CD8-positive, alpha-beta T cell (primary cell): ENCODE measurements at regions of chr6 and their contacts with region 1.

Region 1: GRCh38 chr6:131627724-131628682 is at the start of gene MED23:
- DNase-seq: peak; percentile 92 to 99 (median 95)
- ATAC-seq: peak; percentile 94
- H3K4me3 ChIP-seq: peak within 1 kb of the TSS; percentile 83 to 86
- H3K4me3 Mint-ChIP-seq: peak within 1 kb of the TSS; percentile 98
- H3K27ac ChIP-seq: peak within 1 kb of the TSS; percentile 62 to 72
- H3K27ac Mint-ChIP-seq: peak within 1 kb of the TSS; percentile 94
- H3K4me1 ChIP-seq: peaks cover 18% of the 10 kb centered on the region
- H3K4me1 Mint-ChIP-seq: peaks cover 32% of the 10 kb centered on the region
- H3K27me3 ChIP-seq: no peaks in the 10 kb centered on the region
- H3K27me3 Mint-ChIP-seq: no peaks in the 10 kb centered on the region
- CTCF ChIP-seq: peak; percentile 95
- total RNA-seq, gene MED23: 65.3 to 70.0 TPM

Region 2: DNA sequence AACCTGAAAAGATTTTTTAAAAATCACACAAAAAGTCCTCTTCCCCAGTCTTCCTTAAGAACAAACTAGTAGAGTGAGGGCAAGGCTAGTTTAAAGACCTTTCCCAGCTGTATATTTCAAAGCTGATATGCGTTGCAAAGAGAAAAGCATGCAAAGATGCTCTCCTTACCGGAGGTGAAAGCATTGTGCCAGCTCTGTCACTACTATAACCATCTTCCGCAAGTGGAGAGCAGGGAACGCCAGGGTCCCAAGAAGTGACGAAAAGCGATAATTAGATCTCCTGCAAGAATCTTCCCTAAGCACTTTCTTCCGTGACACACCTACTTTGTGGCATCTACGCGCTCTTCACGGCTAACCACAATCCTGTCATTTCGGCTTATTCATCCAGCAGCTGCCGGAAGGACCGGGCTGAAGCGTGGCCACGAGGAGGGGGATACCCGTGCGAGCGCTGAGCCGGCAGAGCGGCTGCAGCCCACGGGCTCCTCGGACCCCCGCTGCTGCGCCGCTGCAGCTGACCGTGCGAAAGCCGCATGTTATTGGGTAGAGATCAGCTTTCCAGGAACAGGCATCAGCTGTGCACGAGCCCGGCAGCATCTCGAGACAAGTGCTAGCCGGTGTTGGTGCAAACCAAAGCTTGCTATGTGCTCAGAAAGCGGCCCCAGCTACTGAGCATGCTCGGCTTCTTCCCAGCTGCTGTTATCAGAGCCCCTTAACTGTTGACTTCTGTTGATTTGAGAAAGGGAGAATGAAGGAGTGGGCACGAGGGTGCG is 1860.9 kb before region 1 on chr6:
- CTCF ChIA-PET with region 1: no interaction called
- POLR2A ChIA-PET with region 1: no interaction called
- intact Hi-C with region 1: loop called in 1 of 2 experiments (anchors 10 kb)
- DNase-seq: peak in 8 of 9 experiments; percentile 19 to 76 (median 56)
- ATAC-seq: peak; percentile 86
- H3K4me3 ChIP-seq: peak overlapping the region; percentile 49
- H3K4me3 Mint-ChIP-seq: peak overlapping the region; percentile 76
- H3K27ac ChIP-seq: no peak overlapping the region
- H3K27ac Mint-ChIP-seq: no peak overlapping the region
- H3K4me1 ChIP-seq: peaks cover 12% of the 10 kb centered on the region
- H3K4me1 Mint-ChIP-seq: peaks cover 10% of the 10 kb centered on the region
- H3K27me3 ChIP-seq: peaks cover 0 to 4% of the 10 kb centered on the region in 2 experiments
- H3K27me3 Mint-ChIP-seq: peaks cover 35% of the 10 kb centered on the region
- CTCF ChIP-seq: no peak

Region 3: GRCh38 chr6:130885392-130886192 is 742.4 kb before region 1 on chr6:
- CTCF ChIA-PET with region 1: interaction called, 27 read pairs
- POLR2A ChIA-PET with region 1: interaction called, 3 read pairs
- intact Hi-C with region 1: loop called (anchors 1 to 2 kb)
- DNase-seq: peak; percentile 50 to 86 (median 73)
- ATAC-seq: peak; percentile 91
- H3K4me3 ChIP-seq: no peak overlapping the region
- H3K4me3 Mint-ChIP-seq: no peak overlapping the region
- H3K27ac ChIP-seq: no peak overlapping the region
- H3K27ac Mint-ChIP-seq: no peak overlapping the region
- H3K4me1 ChIP-seq: no peaks in the 10 kb centered on the region
- H3K4me1 Mint-ChIP-seq: no peaks in the 10 kb centered on the region
- H3K27me3 ChIP-seq: no peaks in the 10 kb centered on the region
- H3K27me3 Mint-ChIP-seq: no peaks in the 10 kb centered on the region
- CTCF ChIP-seq: peak; percentile 97

Region 4: DNA sequence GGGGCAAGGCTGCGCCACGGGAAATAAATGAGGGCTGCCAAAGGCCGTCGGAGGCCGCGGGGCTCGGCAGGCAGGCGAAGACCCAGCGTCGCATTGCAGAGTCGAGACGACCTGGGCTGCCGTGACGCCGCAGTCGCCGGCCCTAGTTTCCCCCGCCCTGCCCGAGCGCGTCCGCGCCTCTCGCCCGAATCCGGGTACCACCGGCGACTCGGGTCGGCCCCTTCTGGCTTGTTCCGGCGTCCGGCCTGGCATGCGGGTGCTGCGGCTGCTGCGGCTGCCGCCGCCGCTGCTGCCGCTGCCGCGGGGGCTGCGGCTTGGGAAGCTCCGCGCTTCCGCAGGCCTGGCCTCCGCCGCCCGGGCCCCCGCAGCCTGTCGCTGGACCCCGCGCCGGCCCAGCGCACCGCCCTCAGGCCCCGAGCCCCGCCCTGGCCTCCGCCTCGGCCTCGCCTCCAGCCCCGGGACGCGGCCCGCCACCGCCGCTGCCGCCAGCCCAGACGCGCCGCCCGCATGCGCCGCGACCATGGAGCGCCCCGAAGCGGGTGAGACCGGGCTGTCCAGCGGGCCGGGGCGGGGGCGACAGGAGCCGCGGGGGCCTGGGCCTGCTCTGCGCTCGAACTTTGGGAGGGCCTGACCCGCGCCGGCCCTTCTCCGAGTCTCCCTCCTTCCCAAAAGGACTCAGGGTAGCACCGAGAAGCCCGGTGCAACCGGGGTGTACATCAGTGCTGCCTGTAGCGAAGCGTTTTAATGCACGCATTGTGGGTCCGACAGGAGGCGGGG is 492.6 kb before region 1 on chr6 and contains the start of gene AKAP7:
- CTCF ChIA-PET with region 1: interaction called, 6 read pairs
- POLR2A ChIA-PET with region 1: interaction called, 4 read pairs
- intact Hi-C with region 1: loop called in 1 of 2 experiments (anchors 1 kb)
- DNase-seq: peak; percentile 14 to 80 (median 51)
- ATAC-seq: peak; percentile 79
- H3K4me3 ChIP-seq: peak within 1 kb of the TSS; percentile 58 to 66
- H3K4me3 Mint-ChIP-seq: peak within 1 kb of the TSS; percentile 92
- H3K27ac ChIP-seq: peak within 1 kb of the TSS; percentile 58 to 68
- H3K27ac Mint-ChIP-seq: peak within 1 kb of the TSS; percentile 95
- H3K4me1 ChIP-seq: peaks cover 12% of the 10 kb centered on the region
- H3K4me1 Mint-ChIP-seq: peaks cover 36% of the 10 kb centered on the region
- H3K27me3 ChIP-seq: no peaks in the 10 kb centered on the region
- H3K27me3 Mint-ChIP-seq: no peaks in the 10 kb centered on the region
- CTCF ChIP-seq: no peak
- total RNA-seq, gene AKAP7: 11.7 to 14.4 TPM

Region 5: DNA sequence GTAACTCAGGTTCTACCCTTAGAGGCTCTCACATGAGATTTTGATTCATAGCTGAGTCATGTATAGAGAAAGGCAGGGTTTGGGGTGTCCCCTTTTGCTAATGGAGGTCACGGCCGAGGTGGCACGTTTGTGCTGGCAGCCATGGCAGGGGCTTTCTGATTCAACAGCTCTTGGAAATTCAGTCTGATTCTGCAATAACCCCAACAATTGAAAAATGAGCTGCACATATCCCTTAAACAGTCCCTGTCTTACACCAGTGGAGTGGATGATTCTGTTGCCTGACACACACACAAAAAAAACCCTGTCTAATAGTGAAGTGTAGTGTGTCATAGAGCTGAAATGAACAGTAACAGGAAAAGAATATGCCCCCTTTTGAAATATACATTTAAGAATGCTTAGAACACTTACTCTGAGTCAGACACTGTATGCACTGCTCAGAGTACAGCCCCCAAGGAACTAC is 95.4 kb before region 1 on chr6:
- CTCF ChIA-PET with region 1: interaction called, 19 read pairs
- POLR2A ChIA-PET with region 1: interaction called, 3 read pairs
- intact Hi-C with region 1: loop called in 1 of 2 experiments (anchors 2 kb)
- DNase-seq: peak in 3 of 9 experiments; percentile 8 to 31 (median 12)
- ATAC-seq: peak; percentile 43
- H3K4me3 ChIP-seq: no peak overlapping the region
- H3K4me3 Mint-ChIP-seq: no peak overlapping the region
- H3K27ac ChIP-seq: no peak overlapping the region
- H3K27ac Mint-ChIP-seq: peak overlapping the region; percentile 83
- H3K4me1 ChIP-seq: peaks cover 39% of the 10 kb centered on the region
- H3K4me1 Mint-ChIP-seq: peaks cover 52% of the 10 kb centered on the region
- H3K27me3 ChIP-seq: no peaks in the 10 kb centered on the region
- H3K27me3 Mint-ChIP-seq: no peaks in the 10 kb centered on the region
- CTCF ChIP-seq: no peak

Region 6: GRCh38 chr6:131602781-131603312 is 25.2 kb before region 1 on chr6:
- CTCF ChIA-PET with region 1: interaction called, 15 read pairs
- POLR2A ChIA-PET with region 1: interaction called, 6 read pairs
- intact Hi-C with region 1: no loop called
- DNase-seq: no peak
- ATAC-seq: no peak
- H3K4me3 ChIP-seq: no peak overlapping the region
- H3K4me3 Mint-ChIP-seq: no peak overlapping the region
- H3K27ac ChIP-seq: no peak overlapping the region
- H3K27ac Mint-ChIP-seq: no peak overlapping the region
- H3K4me1 ChIP-seq: no peaks in the 10 kb centered on the region
- H3K4me1 Mint-ChIP-seq: peaks cover 1% of the 10 kb centered on the region
- H3K27me3 ChIP-seq: no peaks in the 10 kb centered on the region
- H3K27me3 Mint-ChIP-seq: no peaks in the 10 kb centered on the region
- CTCF ChIP-seq: no peak

Region 7: GRCh38 chr6:131640100-131640499 is 12.1 kb after region 1 on chr6:
- CTCF ChIA-PET with region 1: interaction called, 20 read pairs
- POLR2A ChIA-PET with region 1: interaction called, 4 read pairs
- intact Hi-C with region 1: no loop called
- DNase-seq: peak in 1 of 9 experiments; percentile 10
- ATAC-seq: no peak
- H3K4me3 ChIP-seq: no peak overlapping the region
- H3K4me3 Mint-ChIP-seq: no peak overlapping the region
- H3K27ac ChIP-seq: no peak overlapping the region
- H3K27ac Mint-ChIP-seq: no peak overlapping the region
- H3K4me1 ChIP-seq: no peaks in the 10 kb centered on the region
- H3K4me1 Mint-ChIP-seq: no peaks in the 10 kb centered on the region
- H3K27me3 ChIP-seq: no peaks in the 10 kb centered on the region
- H3K27me3 Mint-ChIP-seq: no peaks in the 10 kb centered on the region
- CTCF ChIP-seq: no peak